Caco-2 (cell line): ENCODE measurements at regions of chr5 and their contacts with region 1.

Region 1: DNA sequence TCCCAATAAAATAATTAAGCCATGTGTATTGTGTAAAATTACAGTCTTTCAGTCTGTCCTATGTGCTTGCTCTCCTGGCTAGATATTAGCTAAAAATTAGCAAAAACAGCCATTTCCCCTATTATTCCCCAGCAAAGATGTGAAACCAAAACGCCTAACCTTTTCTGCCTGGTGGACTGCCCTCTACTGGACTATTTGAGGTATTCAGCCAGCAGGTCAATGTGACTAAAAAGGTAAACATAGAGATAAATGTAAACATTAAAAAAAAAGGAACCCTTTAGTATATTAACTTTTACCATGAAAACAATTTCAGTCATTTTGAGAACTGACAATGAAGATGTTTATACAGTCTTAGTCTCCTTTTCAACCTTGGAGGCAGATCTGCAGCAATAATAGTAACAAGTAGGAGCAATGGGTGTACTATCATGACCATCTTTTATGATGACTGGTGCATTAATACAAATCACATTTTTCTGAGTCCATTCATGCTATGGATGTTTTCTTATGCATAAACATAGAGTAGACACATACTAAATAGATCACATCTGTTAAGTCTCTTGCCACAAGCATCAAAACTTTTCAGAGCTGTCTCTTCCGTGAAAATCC is 10.1 kb downstream of the ATG12 start:
- DNase-seq: peak in 1 of 2 experiments; percentile 51
- H3K4me3 ChIP-seq: no peak overlapping the region
- H3K4me3 Mint-ChIP-seq: no peak overlapping the region
- H3K27ac Mint-ChIP-seq: no peak overlapping the region
- H3K4me1 ChIP-seq: no peaks in the 10 kb centered on the region
- H3K4me1 Mint-ChIP-seq: peaks cover 6% of the 10 kb centered on the region
- H3K27me3 ChIP-seq: no peaks in the 10 kb centered on the region
- H3K27me3 Mint-ChIP-seq: no peaks in the 10 kb centered on the region
- CTCF ChIP-seq: peak; percentile 78 to 79

Region 2: GRCh38 chr5:115625579-115626444 is 205.5 kb before region 1 on chr5 and contains the start of gene TMED7:
- CTCF ChIA-PET with region 1: no interaction called
- POLR2A ChIA-PET with region 1: no interaction called
- intact Hi-C with region 1: loop called (anchors 2 kb)
- DNase-seq: peak; percentile 98
- H3K4me3 ChIP-seq: peak within 1 kb of the TSS; percentile 65
- H3K4me3 Mint-ChIP-seq: no peak within 1 kb of the TSS
- H3K27ac Mint-ChIP-seq: peak within 1 kb of the TSS; percentile 97
- H3K4me1 ChIP-seq: peaks cover 13% of the 10 kb centered on the region; the same call in 1 of the 2 replicates
- H3K4me1 Mint-ChIP-seq: no peaks in the 10 kb centered on the region
- H3K27me3 ChIP-seq: no peaks in the 10 kb centered on the region
- H3K27me3 Mint-ChIP-seq: no peaks in the 10 kb centered on the region
- CTCF ChIP-seq: no peak
- total RNA-seq, gene TMED7: 71.5 and 73.9 TPM in 2 replicates

Region 3: DNA sequence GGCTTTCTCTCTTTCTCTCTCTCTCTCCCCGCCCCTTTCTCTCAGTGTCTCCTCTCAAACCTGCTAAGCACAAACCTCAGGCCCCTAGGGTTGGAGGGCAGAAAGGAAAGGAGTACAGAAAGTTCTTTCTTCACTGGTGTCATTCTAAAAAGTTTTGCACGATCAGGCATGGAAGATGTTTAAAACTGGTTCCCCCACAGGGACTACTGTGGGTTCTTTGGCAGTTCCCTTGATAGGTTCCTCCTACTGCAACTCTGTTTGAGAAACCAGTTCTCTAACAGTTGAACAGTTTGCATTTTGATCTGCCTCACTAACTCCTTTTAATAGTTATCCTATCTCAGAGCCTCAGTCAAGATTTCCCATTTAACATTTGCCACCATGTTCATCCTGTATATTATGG is 97.7 kb before region 1 on chr5:
- CTCF ChIA-PET with region 1: no interaction called
- POLR2A ChIA-PET with region 1: no interaction called
- intact Hi-C with region 1: no loop called
- DNase-seq: no peak
- H3K4me3 ChIP-seq: no peak overlapping the region
- H3K4me3 Mint-ChIP-seq: no peak overlapping the region
- H3K27ac Mint-ChIP-seq: no peak overlapping the region
- H3K4me1 ChIP-seq: 0 out of 2 replicates have a peak, but pooled peaks cover 2% of the 10 kb centered on the region
- H3K4me1 Mint-ChIP-seq: no peaks in the 10 kb centered on the region
- H3K27me3 ChIP-seq: no peaks in the 10 kb centered on the region; the same call in 1 of the 2 replicates
- H3K27me3 Mint-ChIP-seq: peaks cover 16% of the 10 kb centered on the region
- CTCF ChIP-seq: no peak

Region 4: DNA sequence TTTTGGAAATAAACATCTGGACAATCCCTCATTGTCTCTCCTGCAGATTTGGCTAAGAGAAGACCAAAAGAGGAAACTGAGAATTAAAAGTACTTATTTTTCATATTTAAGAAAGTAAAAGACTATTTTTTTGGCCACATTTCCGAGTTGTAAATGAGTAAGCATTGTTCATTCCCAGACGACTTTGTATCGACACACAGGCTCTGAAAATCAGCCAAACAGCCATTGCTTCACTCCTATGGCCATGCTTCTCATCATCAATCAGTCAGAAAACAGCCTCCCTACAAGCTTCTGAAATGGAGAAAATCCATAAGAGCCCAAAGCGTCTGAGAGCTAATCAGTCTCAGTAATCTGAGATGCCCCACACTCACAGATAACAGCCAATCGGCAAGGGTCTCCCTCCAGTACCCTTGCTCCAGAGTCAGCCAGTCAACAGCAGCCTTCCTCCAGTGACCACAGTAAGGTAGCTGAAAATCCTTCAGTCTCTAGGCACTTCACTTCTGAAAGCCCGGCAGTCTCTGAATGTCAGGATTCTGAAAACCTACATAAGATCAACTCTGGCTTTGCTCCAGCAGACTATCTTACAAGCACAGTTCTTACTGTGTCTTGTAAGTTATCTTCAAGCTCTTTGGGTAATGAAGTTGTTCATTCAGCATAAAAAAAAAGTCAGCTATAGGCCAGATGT is 45.7 kb before region 1 on chr5:
- CTCF ChIA-PET with region 1: no interaction called
- POLR2A ChIA-PET with region 1: no interaction called
- intact Hi-C with region 1: loop called (anchors 1 kb)
- DNase-seq: no peak
- H3K4me3 ChIP-seq: no peak overlapping the region
- H3K4me3 Mint-ChIP-seq: no peak overlapping the region
- H3K27ac Mint-ChIP-seq: no peak overlapping the region
- H3K4me1 ChIP-seq: no peaks in the 10 kb centered on the region
- H3K4me1 Mint-ChIP-seq: peaks cover 14% of the 10 kb centered on the region
- H3K27me3 ChIP-seq: no peaks in the 10 kb centered on the region
- H3K27me3 Mint-ChIP-seq: peaks cover 11% of the 10 kb centered on the region
- CTCF ChIP-seq: no peak